CD8-positive, alpha-beta T cell (primary cell): ENCODE measurements at regions of chr2 and their contacts with region 1.

Region 1: GRCh38 chr2:206693399-206694137 is 24.6 kb downstream of the DYTN start:
- DNase-seq: peak in 6 of 9 experiments; percentile 6 to 70 (median 30)
- ATAC-seq: no peak
- H3K4me3 ChIP-seq: no peak overlapping the region
- H3K4me3 Mint-ChIP-seq: no peak overlapping the region
- H3K27ac ChIP-seq: no peak overlapping the region
- H3K27ac Mint-ChIP-seq: no peak overlapping the region
- H3K4me1 ChIP-seq: no peaks in the 10 kb centered on the region
- H3K4me1 Mint-ChIP-seq: peaks cover 3% of the 10 kb centered on the region
- H3K27me3 ChIP-seq: no peaks in the 10 kb centered on the region
- H3K27me3 Mint-ChIP-seq: no peaks in the 10 kb centered on the region
- CTCF ChIP-seq: peak; percentile 69

Region 2: DNA sequence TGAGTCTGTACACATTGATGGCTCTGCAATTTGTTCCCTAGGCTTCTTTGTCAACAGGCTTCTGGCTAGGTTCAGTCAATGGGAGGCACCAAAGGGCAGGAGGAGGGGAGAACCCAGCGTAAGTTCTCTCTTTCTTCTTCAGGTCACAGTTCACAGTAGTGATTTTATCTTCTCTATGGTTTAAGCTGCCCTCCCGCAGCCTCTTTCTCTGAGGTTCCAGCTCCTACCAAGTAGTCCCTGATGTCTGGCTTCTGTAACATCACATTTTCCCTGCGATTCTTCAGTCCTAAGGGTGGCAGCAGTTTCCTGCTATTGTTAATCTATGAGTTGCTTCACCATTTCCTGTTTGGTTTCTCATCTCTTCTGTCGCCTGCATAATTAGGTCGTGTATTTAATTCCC is 353.2 kb after region 1 on chr2:
- CTCF ChIA-PET with region 1: no interaction called
- POLR2A ChIA-PET with region 1: no interaction called
- intact Hi-C with region 1: loop called in 1 of 2 experiments (anchors 2 kb)
- DNase-seq: peak in 6 of 9 experiments; percentile 3 to 66 (median 12)
- ATAC-seq: peak; percentile 65
- H3K4me3 ChIP-seq: no peak overlapping the region
- H3K4me3 Mint-ChIP-seq: peak overlapping the region; percentile 24
- H3K27ac ChIP-seq: no peak overlapping the region
- H3K27ac Mint-ChIP-seq: no peak overlapping the region
- H3K4me1 ChIP-seq: peaks cover 9% of the 10 kb centered on the region
- H3K4me1 Mint-ChIP-seq: peaks cover 10% of the 10 kb centered on the region
- H3K27me3 ChIP-seq: no peaks in the 10 kb centered on the region
- H3K27me3 Mint-ChIP-seq: no peaks in the 10 kb centered on the region
- CTCF ChIP-seq: no peak

Region 3: DNA sequence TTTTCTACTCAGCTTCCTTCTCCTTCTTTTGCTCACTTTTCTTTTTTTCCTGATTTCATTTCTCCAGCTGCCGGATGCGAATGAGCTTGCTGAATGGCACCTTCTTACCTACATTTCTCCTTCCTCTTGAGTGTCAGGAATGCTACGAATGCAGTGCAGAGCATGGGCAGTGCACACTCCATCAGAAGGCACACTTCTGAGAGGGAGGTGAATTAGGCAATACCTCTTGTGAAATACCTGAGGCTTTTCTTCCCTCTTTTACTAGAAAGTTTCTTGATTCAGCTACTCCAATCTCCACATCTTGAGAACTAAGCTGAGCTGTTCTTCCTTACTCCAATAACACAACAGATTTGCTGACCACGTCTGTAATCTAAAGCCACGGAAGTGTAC is 1280.6 kb after region 1 on chr2:
- CTCF ChIA-PET with region 1: no interaction called
- POLR2A ChIA-PET with region 1: no interaction called
- intact Hi-C with region 1: loop called in 1 of 2 experiments (anchors 5 kb)
- DNase-seq: no peak
- ATAC-seq: no peak
- H3K4me3 ChIP-seq: no peak overlapping the region
- H3K4me3 Mint-ChIP-seq: no peak overlapping the region
- H3K27ac ChIP-seq: no peak overlapping the region
- H3K27ac Mint-ChIP-seq: no peak overlapping the region
- H3K4me1 ChIP-seq: peaks cover 4% of the 10 kb centered on the region
- H3K4me1 Mint-ChIP-seq: peaks cover 26% of the 10 kb centered on the region
- H3K27me3 ChIP-seq: no peaks in the 10 kb centered on the region
- H3K27me3 Mint-ChIP-seq: no peaks in the 10 kb centered on the region
- CTCF ChIP-seq: no peak

Region 4: GRCh38 chr2:208040199-208041171 is 1346.9 kb after region 1 on chr2:
- CTCF ChIA-PET with region 1: no interaction called
- POLR2A ChIA-PET with region 1: no interaction called
- intact Hi-C with region 1: loop called (anchors 2 to 10 kb)
- DNase-seq: peak; percentile 29 to 69 (median 65)
- ATAC-seq: peak; percentile 70
- H3K4me3 ChIP-seq: no peak overlapping the region
- H3K4me3 Mint-ChIP-seq: no peak overlapping the region
- H3K27ac ChIP-seq: no peak overlapping the region
- H3K27ac Mint-ChIP-seq: no peak overlapping the region
- H3K4me1 ChIP-seq: no peaks in the 10 kb centered on the region
- H3K4me1 Mint-ChIP-seq: no peaks in the 10 kb centered on the region
- H3K27me3 ChIP-seq: no peaks in the 10 kb centered on the region
- H3K27me3 Mint-ChIP-seq: no peaks in the 10 kb centered on the region
- CTCF ChIP-seq: peak; percentile 56